ENCODE measurements at regions of chr7 and their contacts with region 1.

Region 1: DNA sequence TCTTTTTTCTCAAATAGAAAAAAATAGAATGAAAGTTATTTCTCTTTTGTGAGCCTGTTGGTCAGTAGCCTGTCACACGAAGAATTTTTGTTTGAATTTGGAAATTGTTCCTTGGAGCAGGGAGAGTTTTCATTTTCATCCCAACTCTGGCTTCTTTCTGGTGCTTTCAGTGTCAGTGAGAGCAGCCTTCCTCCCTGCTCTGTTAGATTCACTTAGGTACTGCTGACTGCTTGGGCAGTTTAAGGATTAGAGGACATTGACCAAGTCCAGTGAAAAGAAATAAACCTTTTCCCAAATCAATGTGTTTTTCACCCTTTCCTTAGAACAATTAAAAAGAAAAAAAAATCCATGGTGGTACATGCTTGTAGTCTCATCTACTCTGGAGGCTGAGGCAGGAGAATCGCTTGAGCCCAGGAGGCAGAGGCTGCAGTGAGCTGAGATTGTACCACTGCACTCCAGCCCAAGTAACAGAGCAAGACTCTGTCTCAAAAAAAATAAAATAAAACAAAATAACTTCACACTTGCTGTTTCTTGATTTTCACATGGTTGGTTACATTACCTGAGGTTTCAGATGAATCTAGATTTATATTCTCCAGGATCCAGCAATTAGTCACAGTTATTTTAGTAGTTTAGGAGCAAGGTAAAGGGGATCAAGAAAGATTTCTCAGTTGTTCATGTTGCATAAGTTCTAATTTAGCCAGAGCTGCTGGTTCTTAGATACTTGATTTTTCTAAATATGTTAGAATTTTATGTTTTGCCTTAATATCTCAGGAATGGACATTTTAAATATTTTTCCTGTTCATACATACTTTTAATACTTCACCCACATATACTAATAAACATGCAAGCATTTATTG is 63.1 kb downstream of the ZNRF2 start:
- DNase-seq: no peak
- H3K4me3 ChIP-seq: no peak overlapping the region
- H3K27me3 ChIP-seq: no peaks in the 10 kb centered on the region
- CTCF ChIP-seq: no peak

Region 2: GRCh38 chr7:30364773-30365172 is 17.3 kb after region 1 on chr7:
- CTCF ChIA-PET with region 1: interaction called, 3 read pairs
- POLR2A ChIA-PET with region 1: interaction called, 13 read pairs
- DNase-seq: no peak
- H3K4me3 ChIP-seq: no peak overlapping the region
- H3K27me3 ChIP-seq: no peaks in the 10 kb centered on the region
- CTCF ChIP-seq: no peak

Measured in BJ (cell line).